ENCODE measurements at regions of chr1 and their contacts with region 1.

Region 1: GRCh38 chr1:983799-984473 is 2.0 kb upstream of the PERM1 start:
- DNase-seq: no peak
- H3K4me3 ChIP-seq: no peak overlapping the region
- H3K27ac ChIP-seq: no peak overlapping the region
- H3K4me1 ChIP-seq: no peaks in the 10 kb centered on the region
- H3K27me3 ChIP-seq: peaks cover 2 to 3% of the 10 kb centered on the region in 2 experiments
- CTCF ChIP-seq: peak; percentile 30 to 92
- POLR2A ChIP-seq: no peak

Region 2: DNA sequence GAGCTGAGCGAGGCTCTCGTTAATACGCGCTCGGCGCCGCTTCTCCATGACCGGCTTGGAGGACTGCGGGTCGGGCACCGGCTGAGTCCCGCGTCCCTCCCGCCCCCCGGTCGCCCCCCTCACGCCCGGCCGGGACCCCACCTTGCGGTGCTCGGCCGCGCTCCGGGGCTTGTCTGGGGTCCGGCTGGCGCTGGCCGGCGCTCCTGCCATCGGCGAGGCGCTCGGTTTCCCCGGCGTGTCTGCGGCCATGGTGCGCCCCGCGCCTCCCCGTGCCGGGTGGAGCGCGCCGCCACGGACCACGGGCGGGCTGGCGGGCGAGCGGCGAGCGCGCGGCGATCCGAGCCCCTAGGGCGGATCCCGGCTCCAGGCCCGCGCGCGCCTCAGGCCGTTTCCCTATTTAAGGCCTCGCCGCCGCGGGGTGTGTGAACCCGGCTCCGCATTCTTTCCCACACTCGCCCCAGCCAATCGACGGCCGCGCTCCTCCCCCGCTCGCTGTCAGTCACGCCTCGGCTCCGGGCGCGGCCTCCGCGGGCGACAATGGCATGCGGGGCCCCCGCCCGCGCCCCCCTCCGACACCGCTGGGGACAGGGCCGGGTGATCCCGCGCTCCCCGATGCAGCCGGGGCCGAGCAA is 15.9 kb after region 1 on chr1 and contains the start of gene HES4:
- CTCF ChIA-PET with region 1: interaction called, 27 read pairs
- POLR2A ChIA-PET with region 1: no interaction called
- dilution Hi-C with region 1: no loop called
- intact Hi-C with region 1: no loop called
- DNase-seq: peak; percentile 92
- H3K4me3 ChIP-seq: peak within 1 kb of the TSS; percentile 47 to 55 (median 51)
- H3K27ac ChIP-seq: peak within 1 kb of the TSS; percentile 80
- H3K4me1 ChIP-seq: peaks cover 13% of the 10 kb centered on the region
- H3K27me3 ChIP-seq: peaks cover 0 to 19% of the 10 kb centered on the region in 2 experiments
- CTCF ChIP-seq: no peak
- POLR2A ChIP-seq: peak; percentile 69
- total RNA-seq, gene HES4: 32.0 and 37.6 TPM in 2 replicates

Region 3: DNA sequence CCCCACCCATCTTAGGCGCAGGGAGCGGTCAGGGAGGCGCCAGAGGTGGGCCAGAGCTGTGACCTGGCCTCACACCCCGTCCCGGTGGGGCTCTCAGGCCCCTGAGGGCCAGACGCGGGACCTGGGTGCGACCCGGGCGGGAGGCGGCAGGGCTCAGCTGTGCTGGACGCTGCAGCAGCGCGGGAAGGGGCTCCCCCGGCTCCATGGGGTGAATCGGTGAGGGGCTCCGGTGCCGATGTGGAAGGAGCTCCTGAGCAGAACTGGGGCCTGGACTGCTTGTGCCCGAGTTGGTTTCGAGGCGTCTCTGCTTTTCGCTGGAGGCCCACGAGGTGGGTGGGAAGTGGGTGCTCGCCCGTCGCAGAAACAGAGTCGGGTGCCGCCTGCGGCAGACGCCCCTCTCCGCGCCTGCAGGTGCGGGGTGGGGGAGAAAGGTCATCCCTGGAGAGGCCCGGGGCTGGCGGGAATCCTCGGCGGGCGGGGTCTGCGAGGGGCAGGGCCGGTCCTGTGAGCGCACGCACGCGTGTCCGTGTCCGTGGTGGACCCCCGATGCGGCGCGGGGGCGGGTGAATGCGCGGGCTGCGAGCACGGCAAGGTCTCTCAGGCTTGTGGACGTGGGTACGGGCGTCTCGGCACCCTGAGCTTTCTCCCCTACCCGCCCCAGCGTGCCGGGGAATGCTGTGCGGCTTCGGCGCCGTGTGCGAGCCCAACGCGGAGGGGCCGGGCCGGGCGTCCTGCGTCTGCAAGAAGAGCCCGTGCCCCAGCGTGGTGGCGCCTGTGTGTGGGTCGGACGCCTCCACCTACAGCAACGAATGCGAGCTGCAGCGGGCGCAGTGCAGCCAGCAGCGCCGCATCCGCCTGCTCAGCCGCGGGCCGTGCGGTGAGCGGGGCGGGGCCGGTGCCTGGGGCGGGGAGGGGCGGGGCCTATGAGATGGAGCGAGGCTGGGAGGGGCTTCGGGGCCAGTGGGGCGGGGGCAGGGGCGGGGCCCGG is 56.4 kb after region 1 on chr1:
- CTCF ChIA-PET with region 1: interaction called, 12 read pairs
- POLR2A ChIA-PET with region 1: no interaction called
- dilution Hi-C with region 1: no loop called
- intact Hi-C with region 1: no loop called
- DNase-seq: peak; percentile 84
- H3K4me3 ChIP-seq: peak overlapping the region in 1 of 3 experiments; percentile 8
- H3K27ac ChIP-seq: no peak overlapping the region
- H3K4me1 ChIP-seq: peaks cover 7% of the 10 kb centered on the region
- H3K27me3 ChIP-seq: no peaks in the 10 kb centered on the region
- CTCF ChIP-seq: peak in 1 of 2 donors; percentile 27
- POLR2A ChIP-seq: no peak

Region 4: DNA sequence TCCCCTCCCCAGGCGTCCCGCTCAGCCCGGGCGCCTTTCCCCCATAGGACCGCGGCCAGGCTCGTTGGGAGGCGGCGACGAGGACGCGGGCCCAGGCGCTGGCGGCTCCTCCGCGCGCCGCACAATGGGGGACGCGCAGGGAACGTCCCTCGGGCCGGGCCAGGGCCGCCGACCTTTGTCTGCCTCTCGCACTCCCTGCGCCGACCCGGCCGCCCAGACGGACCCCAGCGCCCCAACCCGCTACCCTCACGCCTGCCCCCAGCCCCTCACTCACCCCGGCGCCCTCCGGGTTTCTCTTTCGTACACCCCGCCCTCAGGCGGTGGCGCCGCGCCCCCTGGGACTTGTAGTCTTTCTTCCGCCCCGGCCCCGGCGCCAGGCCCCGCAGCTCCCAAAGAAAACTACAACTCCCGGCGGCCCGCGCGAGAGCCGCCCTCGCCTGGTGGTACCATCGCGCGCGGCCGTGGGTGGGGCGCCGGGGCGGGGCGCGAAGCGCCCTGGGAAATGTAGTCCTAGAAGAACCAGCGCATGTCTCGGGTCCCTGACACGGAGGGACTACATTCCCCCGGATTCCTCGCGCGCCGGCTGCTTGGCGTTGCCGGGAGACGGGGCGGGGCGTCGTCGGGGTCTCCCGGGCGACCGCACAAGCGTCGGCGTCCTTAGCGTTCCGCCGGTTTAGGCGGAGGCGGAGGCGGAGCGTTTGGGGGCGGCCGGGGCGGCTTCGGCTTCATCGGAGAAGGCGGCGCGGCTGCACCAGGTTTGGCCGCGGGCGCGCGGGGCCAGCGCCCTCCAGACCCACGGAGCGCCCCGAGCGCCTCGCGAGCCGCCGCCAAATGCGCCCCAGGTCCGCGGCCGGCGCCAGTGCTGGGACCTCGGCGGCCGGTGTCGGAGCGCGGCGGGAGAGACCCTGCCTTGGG is 132.1 kb after region 1 on chr1 and contains the start of gene C1orf159:
- CTCF ChIA-PET with region 1: no interaction called
- POLR2A ChIA-PET with region 1: no interaction called
- dilution Hi-C with region 1: no loop called
- intact Hi-C with region 1: loop called (anchors 2 kb)
- DNase-seq: peak; percentile 97
- H3K4me3 ChIP-seq: peak within 1 kb of the TSS; percentile 44 to 59 (median 57)
- H3K27ac ChIP-seq: peak within 1 kb of the TSS; percentile 12
- H3K4me1 ChIP-seq: no peaks in the 10 kb centered on the region
- H3K27me3 ChIP-seq: peaks cover 0 to 2% of the 10 kb centered on the region in 2 experiments
- CTCF ChIP-seq: peak in 1 of 2 donors; percentile 2
- POLR2A ChIP-seq: no peak
- total RNA-seq, gene C1orf159: 19.7 and 20.1 TPM in 2 replicates

Measured in endothelial cell of umbilical vein (primary cell).